ENCODE measurements at regions of chr5 and their contacts with region 1.

Region 1: DNA sequence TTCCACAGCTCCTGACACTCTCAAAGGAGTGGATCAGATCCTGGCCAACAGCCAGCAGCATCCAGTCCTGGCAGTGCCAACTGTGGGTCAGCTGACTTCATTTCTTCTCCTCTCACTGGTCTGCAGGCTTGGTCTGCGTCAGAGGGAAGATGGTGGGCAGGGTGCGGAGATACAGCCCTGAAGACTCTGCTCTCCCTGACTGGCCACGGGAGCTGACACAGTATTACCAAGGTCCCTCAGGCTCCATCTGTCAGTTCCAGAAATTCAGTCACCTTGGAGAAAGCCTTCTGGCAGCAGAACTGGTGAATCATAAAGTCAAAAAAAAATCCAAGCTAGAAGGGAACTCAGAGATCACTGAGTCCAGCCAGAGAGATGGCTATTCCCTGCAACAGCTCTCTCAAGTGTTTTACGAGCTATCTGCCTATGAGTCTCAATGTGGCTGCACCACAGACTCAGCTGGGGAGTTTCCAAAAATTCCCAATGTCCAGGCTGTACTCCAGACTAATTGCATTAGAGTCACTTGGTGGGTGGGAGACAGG is 28.0 kb downstream of the C1QTNF2 start:
- DNase-seq: no peak
- H3K4me3 Mint-ChIP-seq: no peak overlapping the region
- H3K27ac Mint-ChIP-seq: no peak overlapping the region
- H3K4me1 Mint-ChIP-seq: peaks cover 6% of the 10 kb centered on the region
- H3K27me3 Mint-ChIP-seq: no peaks in the 10 kb centered on the region

Region 2: DNA sequence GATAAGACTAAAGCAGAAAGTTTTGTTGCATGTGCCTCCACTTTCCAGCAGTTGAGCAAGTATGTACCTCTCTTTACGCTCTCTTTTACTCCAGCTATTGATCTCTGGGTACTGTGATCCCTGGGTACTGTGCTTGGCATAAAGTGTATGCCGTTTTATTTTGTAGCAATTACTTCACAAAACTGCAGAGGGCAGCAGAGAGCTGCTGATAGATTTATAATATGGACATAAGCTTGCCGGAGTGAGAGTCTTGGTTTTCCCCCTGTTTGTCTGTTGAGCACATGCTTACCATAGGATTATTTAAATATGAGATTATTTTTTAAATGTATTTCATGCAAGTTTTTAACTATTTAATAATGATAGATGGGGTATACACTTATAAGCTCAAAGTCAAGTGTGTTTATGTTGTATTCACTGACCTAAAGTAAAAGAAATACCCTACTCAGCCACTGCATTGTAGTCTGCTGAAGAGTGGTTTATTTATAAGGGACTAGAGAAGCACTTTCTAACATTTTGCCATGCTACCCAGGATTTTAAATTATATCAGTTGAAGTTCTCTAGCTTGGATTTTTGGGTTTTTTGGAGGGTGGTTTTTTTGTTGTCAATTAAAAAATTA is 320.5 kb before region 1 on chr5:
- intact Hi-C with region 1: loop called (anchors 1 kb)
- DNase-seq: peak; percentile 36
- H3K4me3 Mint-ChIP-seq: no peak overlapping the region
- H3K27ac Mint-ChIP-seq: no peak overlapping the region
- H3K4me1 Mint-ChIP-seq: peaks cover 17% of the 10 kb centered on the region
- H3K27me3 Mint-ChIP-seq: no peaks in the 10 kb centered on the region

Region 3: DNA sequence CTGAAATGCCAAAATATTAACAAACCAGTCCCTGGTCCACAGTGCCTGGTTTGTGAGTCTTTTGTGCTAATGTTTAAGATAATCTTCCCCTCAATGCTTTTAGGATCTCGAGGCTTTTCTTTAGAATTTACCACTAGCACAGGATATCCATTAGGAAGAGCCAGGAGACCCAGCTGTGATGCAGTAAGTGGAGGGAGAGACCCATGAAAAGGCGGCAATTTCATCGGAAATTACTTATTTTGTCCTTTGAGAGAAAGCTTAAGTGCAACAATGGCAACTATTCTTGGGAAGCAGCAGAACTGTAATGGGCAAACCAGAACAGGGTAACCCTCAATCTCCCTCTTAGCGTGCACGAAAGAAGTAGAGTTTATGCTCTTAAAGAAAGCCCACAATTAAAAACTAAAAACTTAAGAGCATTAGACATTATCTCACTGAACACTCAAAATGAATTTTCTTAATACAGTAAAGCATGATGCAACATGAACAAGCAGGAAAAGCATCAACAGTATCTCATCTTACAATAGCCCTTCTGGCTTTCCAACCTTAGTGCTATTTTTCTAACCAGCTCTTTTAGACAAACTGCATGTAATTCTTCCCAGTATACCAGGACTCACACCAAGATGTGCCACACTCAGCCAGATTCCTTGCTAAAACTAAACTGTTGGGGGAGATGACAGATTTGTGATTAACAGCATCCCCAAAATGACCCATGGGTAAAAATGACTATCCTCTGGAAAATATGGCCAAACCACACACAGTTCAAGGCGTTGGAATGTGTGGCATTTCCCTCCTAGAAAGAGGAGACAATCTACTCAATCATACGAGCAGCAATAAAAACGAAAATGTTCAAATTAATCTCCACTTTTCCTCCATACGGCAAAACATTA is 259.6 kb before region 1 on chr5:
- intact Hi-C with region 1: loop called (anchors 1 kb)
- DNase-seq: no peak
- H3K4me3 Mint-ChIP-seq: no peak overlapping the region
- H3K27ac Mint-ChIP-seq: no peak overlapping the region
- H3K4me1 Mint-ChIP-seq: no peaks in the 10 kb centered on the region
- H3K27me3 Mint-ChIP-seq: no peaks in the 10 kb centered on the region

Region 4: DNA sequence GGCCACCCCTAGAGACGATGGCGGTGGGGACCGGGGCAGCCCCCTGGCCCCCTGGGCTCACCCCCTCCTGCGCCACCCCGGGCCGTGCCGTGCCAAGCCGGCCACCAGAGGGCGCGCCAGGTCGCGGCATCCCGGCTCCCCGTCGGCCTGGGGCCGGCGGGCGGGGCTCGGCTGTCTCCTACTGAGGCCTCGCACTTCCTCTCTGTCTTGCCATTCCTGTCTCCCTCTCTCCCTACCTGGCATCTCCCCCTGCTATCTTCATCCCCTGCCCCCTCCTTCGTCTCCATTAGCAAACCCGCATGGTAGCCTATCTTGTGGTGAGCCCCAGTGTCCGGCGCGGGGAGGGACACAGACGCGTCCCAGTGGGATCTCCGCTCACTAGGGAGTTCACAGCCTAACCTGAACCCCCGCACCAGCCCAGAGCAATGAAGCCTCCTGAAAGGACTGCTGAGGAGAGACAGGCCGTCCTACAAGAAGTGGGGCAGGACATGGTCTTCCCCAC is 143.0 kb before region 1 on chr5:
- intact Hi-C with region 1: loop called (anchors 1 kb)
- DNase-seq: peak; percentile 59
- H3K4me3 Mint-ChIP-seq: peak overlapping the region; percentile 66
- H3K27ac Mint-ChIP-seq: no peak overlapping the region
- H3K4me1 Mint-ChIP-seq: peaks cover 3% of the 10 kb centered on the region
- H3K27me3 Mint-ChIP-seq: peaks cover 8% of the 10 kb centered on the region

Region 5: DNA sequence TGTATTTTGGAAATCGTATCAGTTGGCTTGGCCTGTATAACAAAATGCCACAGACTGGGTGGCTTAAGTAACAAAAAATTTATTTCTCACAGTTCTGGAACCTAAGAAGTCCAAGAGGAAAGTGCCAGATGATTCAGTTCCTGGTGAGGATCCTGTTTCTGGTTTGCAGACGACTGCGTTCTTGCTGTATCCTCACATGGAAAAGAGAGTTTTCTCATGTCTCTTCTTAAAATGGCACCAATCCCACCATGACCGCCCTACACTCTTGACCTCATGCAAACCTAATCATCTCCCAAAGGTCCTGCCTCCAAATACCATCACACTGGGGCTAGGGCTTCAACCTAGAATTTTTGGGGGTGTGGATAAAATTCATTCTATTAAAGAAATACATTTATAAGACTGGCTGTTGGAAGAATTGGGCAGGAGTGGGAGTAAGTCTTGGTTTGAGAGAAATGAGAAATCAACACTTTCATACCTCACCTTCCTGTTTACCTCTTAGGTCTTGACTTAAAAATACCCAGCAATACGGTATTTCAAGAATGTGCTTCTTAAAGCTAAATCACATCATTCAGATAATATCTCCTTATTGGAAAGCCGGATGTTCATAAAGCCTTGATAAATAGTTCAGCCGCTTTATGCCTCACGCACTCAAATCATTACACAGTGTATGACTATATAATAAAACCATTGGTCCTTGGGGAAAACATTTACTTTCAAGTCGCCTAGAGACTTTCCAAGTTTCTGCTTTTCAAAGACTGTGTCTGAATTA is 107.9 kb after region 1 on chr5:
- intact Hi-C with region 1: no loop called
- DNase-seq: no peak
- H3K4me3 Mint-ChIP-seq: no peak overlapping the region
- H3K27ac Mint-ChIP-seq: no peak overlapping the region
- H3K4me1 Mint-ChIP-seq: peaks cover 40% of the 10 kb centered on the region
- H3K27me3 Mint-ChIP-seq: no peaks in the 10 kb centered on the region